Left colon (tissue), 2 donors: ENCODE measurements at regions of chr3 and their contacts with region 1.

Region 1: GRCh38 chr3:196609343-196609775 is 30.1 kb upstream of the NRROS start:
- DNase-seq: peak; percentile 91 to 95
- ATAC-seq: peak; percentile 99

Region 2: GRCh38 chr3:196055683-196056270 is 553.6 kb before region 1 on chr3:
- intact Hi-C with region 1: no loop called
- DNase-seq: no peak
- ATAC-seq: peak; percentile 20

Region 3: GRCh38 chr3:196684548-196685407 is 75.4 kb after region 1 on chr3:
- intact Hi-C with region 1: loop called (anchors 5 to 10 kb)
- DNase-seq: peak; percentile 50 to 74
- ATAC-seq: peak; percentile 90